Left cardiac atrium (tissue), 4 donors: ENCODE measurements at regions of chr9 and their contacts with region 1.

Region 1: GRCh38 chr9:14880951-14881465 is 29.2 kb downstream of the FREM1 start:
- DNase-seq: no peak
- ATAC-seq: no peak

Region 2: DNA sequence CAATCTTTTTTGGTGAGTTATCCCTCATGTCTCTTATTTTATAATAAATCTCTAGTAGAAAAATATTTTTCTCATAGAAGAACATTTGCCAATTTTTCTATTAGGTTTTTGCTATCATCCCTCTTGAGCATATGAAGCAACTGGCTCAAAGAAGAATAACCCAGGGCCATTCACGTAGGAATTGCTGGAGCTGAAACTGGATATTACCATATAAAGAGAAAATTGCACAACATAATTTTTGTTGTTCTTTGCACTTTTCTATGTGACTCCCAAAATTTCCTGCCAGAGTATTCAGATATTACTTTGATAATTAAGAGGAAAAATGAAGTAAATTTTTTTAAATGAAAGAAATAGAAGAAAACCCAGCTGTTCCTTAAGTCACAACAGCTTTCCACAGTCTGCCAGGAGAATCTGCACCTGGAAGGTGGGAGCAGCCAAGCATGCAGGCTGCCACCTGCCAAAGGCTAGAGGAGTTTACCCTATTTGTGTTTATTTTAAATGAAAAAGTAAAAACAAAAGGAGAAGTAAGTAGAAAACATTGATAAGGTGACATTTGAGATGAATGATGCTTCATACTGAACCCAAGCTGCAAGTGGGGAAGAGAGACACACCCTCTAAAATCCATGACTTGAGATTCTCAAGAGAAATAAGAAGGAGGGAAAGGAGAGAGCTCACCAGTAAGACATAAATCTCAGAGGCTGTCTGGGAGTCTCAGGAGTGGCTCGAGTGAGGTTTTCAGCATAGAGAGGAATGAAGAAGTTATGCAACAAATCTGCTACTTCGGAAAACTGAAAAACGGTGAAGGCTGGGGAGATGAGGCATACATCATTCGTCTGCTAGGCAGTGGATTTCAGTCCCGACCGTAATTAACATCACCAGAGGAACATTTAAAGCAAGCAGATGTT is 60.7 kb after region 1 on chr9:
- intact Hi-C with region 1: loop called in 1 of 2 experiments (anchors 10 kb)
- DNase-seq: no peak
- ATAC-seq: peak; percentile 44 to 67